MCF 10A (cell line): ENCODE measurements at regions of chr6 and their contacts with region 1.

Region 1: GRCh38 chr6:148746363-148747144 is at the start of gene UST:
- DNase-seq: peak; percentile 96
- H3K4me3 Mint-ChIP-seq: peak within 1 kb of the TSS; percentile 88
- H3K27ac Mint-ChIP-seq: peak within 1 kb of the TSS; percentile 74
- H3K4me1 Mint-ChIP-seq: peaks cover 42% of the 10 kb centered on the region
- H3K27me3 Mint-ChIP-seq: no peaks in the 10 kb centered on the region
- CTCF ChIP-seq: peak; percentile 76
- total RNA-seq, gene UST: 10.0 and 10.8 TPM in 2 replicates

Region 2: GRCh38 chr6:148432462-148433195 is 313.9 kb before region 1 on chr6:
- CTCF ChIA-PET with region 1: no interaction called
- POLR2A ChIA-PET with region 1: no interaction called
- intact Hi-C with region 1: no loop called
- DNase-seq: peak; percentile 24
- H3K4me3 Mint-ChIP-seq: no peak overlapping the region
- H3K27ac Mint-ChIP-seq: no peak overlapping the region
- H3K4me1 Mint-ChIP-seq: peaks cover 12% of the 10 kb centered on the region
- H3K27me3 Mint-ChIP-seq: no peaks in the 10 kb centered on the region
- CTCF ChIP-seq: no peak

Region 3: GRCh38 chr6:148593130-148593812 is 153.3 kb before region 1 on chr6:
- CTCF ChIA-PET with region 1: no interaction called
- POLR2A ChIA-PET with region 1: no interaction called
- intact Hi-C with region 1: no loop called
- DNase-seq: no peak
- H3K4me3 Mint-ChIP-seq: no peak overlapping the region
- H3K27ac Mint-ChIP-seq: no peak overlapping the region
- H3K4me1 Mint-ChIP-seq: peaks cover 10% of the 10 kb centered on the region
- H3K27me3 Mint-ChIP-seq: no peaks in the 10 kb centered on the region
- CTCF ChIP-seq: no peak

Region 4: DNA sequence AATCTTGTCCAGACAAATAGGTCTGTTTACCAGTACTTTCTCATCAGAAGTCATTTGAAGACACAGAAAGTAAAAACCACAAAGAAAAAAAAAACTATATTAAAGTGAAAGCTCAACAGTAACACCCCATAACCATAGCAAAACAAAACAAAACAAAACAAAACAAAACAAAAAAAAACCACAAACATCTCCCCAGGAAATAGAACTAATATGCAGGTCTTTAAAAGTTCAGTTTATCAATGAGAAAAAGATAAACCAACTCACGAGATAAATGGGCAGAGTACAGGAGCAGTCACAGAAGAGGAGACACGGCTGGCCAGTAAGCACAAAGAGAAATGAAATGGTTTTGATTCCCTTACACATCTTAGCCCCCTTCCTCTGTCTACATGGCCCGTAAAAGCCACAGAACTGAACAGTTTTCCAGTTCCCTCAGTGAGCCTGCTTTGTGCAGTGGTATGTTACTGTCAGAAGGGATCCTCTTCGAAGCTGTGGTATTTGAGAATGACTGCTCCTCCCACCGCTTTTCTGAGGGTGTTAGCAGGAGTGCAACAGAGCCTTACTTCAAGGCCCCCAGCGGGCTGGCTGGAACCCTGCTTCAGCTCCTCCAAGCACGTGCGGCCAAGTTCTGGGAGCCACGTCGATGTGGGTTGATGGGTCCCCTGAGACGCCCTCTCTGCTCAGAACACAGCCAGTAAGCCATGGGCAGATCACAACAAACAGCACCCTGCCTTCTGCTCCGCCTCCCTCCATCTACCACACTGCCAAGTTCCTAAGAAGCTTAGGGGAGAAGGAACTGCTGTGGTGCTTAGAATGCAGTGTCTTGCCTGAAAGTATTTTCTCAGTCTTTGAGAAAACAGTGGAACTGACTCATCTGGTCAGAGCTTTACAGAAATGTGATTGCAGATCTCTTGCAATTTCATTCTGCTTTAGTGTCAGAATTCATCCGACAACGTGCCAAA is 14.3 kb after region 1 on chr6:
- CTCF ChIA-PET with region 1: no interaction called
- POLR2A ChIA-PET with region 1: interaction called, 10 read pairs
- intact Hi-C with region 1: no loop called
- DNase-seq: peak; percentile 54
- H3K4me3 Mint-ChIP-seq: peak overlapping the region; percentile 65
- H3K27ac Mint-ChIP-seq: peak overlapping the region; percentile 90
- H3K4me1 Mint-ChIP-seq: peaks cover 23% of the 10 kb centered on the region
- H3K27me3 Mint-ChIP-seq: no peaks in the 10 kb centered on the region
- CTCF ChIP-seq: no peak

Region 5: GRCh38 chr6:148771205-148771601 is 24.6 kb after region 1 on chr6:
- CTCF ChIA-PET with region 1: interaction called, 3 read pairs
- POLR2A ChIA-PET with region 1: interaction called, 17 read pairs
- intact Hi-C with region 1: no loop called
- DNase-seq: peak; percentile 47
- H3K4me3 Mint-ChIP-seq: no peak overlapping the region
- H3K27ac Mint-ChIP-seq: no peak overlapping the region
- H3K4me1 Mint-ChIP-seq: peaks cover 15% of the 10 kb centered on the region
- H3K27me3 Mint-ChIP-seq: no peaks in the 10 kb centered on the region
- CTCF ChIP-seq: no peak

Region 6: DNA sequence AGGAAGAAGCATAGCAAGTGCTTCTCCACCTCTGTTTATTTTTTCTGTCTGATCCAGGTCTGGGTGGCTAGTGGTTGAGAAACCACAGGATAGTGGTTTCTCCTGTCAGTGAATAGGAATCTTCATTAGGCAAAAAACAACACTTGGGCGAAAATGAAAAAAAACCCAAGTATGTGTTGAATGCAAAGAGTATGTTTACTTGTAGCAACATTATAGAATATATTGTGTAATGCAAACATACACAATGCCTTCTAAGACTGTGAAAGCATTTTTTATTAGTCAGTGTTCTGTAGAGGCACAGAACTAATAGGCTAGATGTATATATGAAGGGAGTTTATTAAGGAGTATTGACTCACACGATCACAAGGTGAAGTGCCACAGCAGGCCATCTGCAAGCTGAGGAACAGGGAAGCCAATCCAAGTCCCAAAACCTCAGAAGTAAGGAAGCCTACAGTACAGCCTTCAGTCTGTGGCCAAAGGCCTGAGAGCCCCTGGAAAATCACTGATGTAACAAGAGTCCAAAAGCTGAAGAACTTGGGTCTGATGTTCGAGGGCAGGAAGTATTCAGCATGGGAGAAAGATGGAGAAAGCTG is 111.3 kb after region 1 on chr6:
- CTCF ChIA-PET with region 1: no interaction called
- POLR2A ChIA-PET with region 1: interaction called, 6 read pairs
- intact Hi-C with region 1: loop called (anchors 2 kb)
- DNase-seq: peak; percentile 76
- H3K4me3 Mint-ChIP-seq: no peak overlapping the region
- H3K27ac Mint-ChIP-seq: peak overlapping the region; percentile 27
- H3K4me1 Mint-ChIP-seq: peaks cover 30% of the 10 kb centered on the region
- H3K27me3 Mint-ChIP-seq: no peaks in the 10 kb centered on the region
- CTCF ChIP-seq: no peak

Region 7: DNA sequence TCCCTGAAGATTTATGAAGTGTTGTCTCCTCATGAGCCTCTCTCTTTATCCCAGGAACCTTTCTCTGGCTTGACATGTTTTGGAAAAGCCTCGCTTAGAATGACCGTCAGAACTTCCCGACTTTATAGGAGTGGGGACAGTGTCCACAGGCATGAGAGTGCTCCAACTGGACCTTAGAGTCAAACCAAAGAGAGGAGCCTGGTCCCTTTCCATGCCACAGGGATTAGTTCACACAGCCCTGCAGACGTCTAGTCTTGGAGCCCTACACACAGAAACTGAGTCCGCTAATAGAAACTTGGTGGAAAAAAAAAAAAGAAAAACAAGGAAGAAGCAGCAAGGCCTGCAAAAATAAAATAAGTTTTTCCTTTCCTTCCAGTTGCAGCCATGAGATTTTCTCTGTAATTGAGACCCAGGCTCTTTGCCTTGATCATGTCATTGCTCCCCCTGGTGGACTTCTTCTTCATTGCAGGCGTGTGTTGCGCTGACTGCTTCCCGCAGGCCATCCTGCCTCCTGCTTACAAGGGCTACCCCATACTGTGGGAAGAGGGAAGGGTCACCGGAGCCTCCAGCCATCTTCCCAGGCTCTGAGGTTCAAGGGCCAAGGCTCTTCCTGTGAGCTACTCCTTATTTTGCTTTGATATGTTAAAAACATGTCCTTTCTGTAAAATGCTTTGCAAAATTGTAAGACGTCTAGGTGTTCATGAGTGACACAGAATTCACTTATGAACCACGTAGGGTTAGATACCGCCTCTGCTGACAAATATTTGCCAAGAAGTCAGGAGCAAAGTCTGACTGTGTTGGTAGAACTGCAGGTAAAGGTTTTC is 201.3 kb after region 1 on chr6:
- CTCF ChIA-PET with region 1: interaction called, 5 read pairs
- POLR2A ChIA-PET with region 1: no interaction called
- intact Hi-C with region 1: loop called (anchors 1 kb)
- DNase-seq: peak; percentile 86
- H3K4me3 Mint-ChIP-seq: no peak overlapping the region
- H3K27ac Mint-ChIP-seq: no peak overlapping the region
- H3K4me1 Mint-ChIP-seq: peaks cover 8% of the 10 kb centered on the region
- H3K27me3 Mint-ChIP-seq: no peaks in the 10 kb centered on the region
- CTCF ChIP-seq: peak; percentile 81

Region 8: GRCh38 chr6:149012040-149012545 is 265.5 kb after region 1 on chr6:
- CTCF ChIA-PET with region 1: no interaction called
- POLR2A ChIA-PET with region 1: no interaction called
- intact Hi-C with region 1: loop called (anchors 1 kb)
- DNase-seq: peak; percentile 93
- H3K4me3 Mint-ChIP-seq: no peak overlapping the region
- H3K27ac Mint-ChIP-seq: no peak overlapping the region
- H3K4me1 Mint-ChIP-seq: peaks cover 17% of the 10 kb centered on the region
- H3K27me3 Mint-ChIP-seq: no peaks in the 10 kb centered on the region
- CTCF ChIP-seq: no peak